Mammary epithelial cell (primary cell): ENCODE measurements at regions of chr15 and their contacts with region 1.

Region 1: DNA sequence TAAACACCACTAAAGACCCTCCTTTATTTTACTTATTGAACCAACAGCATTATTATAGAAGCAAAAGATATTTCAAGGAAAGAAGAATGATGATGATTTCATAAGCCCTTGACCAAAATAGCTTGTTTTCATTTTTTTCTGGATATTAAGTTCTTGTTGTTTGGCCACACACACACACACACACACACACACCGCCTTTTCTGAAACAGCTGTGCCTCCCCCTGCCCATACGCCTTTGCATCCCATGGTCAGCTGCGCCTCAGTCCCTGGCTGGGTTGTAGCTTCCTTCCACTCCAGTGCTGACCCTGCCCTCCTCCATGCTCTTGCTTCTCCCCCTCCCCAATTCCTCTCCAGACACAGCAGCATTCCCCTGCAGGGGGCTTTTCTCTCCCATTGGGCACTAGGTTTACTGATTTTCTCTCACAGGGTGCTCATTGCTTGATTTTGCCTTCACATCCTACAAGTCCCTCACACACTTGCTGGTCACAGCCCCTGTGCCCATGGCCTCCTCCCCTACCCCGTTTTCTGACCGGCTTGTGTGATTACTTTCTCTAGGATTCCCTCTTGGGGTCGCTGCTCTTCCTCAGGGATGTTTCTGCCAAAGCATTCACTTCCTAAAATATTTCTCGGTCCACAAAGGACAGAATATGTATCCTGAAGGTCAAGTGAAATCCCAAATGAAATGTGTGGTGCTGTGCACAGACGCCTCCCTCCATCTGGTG is 18.4 kb downstream of the MESP1 start:
- DNase-seq: no peak
- H3K4me3 ChIP-seq: no peak overlapping the region
- H3K27ac ChIP-seq: no peak overlapping the region
- H3K4me1 ChIP-seq: no peaks in the 10 kb centered on the region
- H3K27me3 ChIP-seq: no peaks in the 10 kb centered on the region
- CTCF ChIP-seq: no peak

Region 2: DNA sequence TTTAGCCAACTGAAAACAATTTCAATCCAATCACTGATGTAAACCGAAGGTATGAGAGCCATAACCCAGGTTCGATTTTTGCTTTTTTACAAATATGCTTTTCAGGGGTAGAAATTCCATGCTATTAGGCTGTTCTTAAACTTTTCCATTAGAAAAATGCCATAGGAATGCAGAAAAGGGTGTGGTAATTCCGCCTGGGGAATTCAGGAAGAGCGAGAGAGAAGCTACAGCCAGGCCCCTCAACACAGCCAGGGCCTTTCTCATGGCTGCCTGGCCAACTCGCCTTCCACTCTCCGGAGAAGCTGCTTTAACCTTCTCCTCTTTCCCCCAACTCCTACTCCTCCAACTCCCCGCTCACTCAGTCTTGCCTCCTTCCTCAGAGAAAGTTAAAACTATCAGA is 166.5 kb before region 1 on chr15:
- CTCF ChIA-PET with region 1: no interaction called
- dilution Hi-C with region 1: no loop called
- in situ Hi-C with region 1: no loop called
- intact Hi-C with region 1: no loop called
- DNase-seq: no peak
- H3K4me3 ChIP-seq: no peak overlapping the region
- H3K27ac ChIP-seq: no peak overlapping the region
- H3K4me1 ChIP-seq: no peaks in the 10 kb centered on the region
- H3K27me3 ChIP-seq: no peaks in the 10 kb centered on the region
- CTCF ChIP-seq: no peak

Region 3: DNA sequence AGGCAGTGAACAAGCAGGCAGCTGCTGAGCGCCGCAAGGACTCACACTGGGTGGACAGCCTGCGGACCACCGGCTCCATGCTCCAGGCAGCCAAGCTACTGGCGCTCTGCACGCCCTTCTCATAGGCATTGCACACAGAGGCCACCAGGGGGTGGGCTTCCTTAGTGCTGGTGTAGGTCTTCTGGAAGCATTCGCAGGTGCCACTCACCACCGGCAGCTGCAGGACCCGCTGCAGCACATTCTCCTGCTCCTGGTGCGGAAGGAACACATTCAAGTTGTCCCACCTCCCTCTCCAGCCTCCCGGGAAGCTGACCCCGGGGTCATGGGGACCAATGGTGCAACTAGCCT is 59.5 kb before region 1 on chr15:
- CTCF ChIA-PET with region 1: no interaction called
- dilution Hi-C with region 1: loop called (anchors 5 kb)
- in situ Hi-C with region 1: no loop called
- intact Hi-C with region 1: no loop called
- DNase-seq: no peak
- H3K4me3 ChIP-seq: no peak overlapping the region
- H3K27ac ChIP-seq: no peak overlapping the region
- H3K4me1 ChIP-seq: no peaks in the 10 kb centered on the region
- H3K27me3 ChIP-seq: no peaks in the 10 kb centered on the region
- CTCF ChIP-seq: peak; percentile 24